ENCODE measurements at regions of chr1 and their contacts with region 1.

Region 1: DNA sequence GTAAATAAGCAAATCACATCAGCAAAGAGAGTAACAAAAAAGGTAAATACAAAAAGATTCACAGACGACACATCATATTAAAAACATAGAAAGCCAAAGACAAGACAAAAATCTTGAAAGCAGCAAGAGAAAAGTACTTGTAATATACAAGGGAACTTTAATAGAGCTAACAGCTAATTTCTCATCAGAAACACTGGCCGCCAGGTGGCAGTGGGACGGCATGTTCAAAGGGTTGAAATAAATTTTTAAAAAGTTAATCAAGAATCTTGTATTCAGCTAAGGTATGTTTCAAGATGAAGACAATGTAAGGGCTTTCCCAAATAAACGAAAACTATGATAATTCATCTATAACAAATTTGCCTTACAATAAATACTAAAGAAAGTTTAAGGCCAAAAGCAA is 358.1 kb downstream of the LRRIQ3 start:
- DNase-seq: peak; percentile 1
- ATAC-seq: no peak
- H3K4me3 ChIP-seq: no peak overlapping the region
- H3K27ac ChIP-seq: no peak overlapping the region
- H3K4me1 ChIP-seq: no peaks in the 10 kb centered on the region
- H3K27me3 ChIP-seq: no peaks in the 10 kb centered on the region
- CTCF ChIP-seq: peak; percentile 41; the same call in 1 of the 2 replicates
- EP300 ChIP-seq: no peak
- POLR2A ChIP-seq: no peak
- RAD21 ChIP-seq: no peak

Region 2: DNA sequence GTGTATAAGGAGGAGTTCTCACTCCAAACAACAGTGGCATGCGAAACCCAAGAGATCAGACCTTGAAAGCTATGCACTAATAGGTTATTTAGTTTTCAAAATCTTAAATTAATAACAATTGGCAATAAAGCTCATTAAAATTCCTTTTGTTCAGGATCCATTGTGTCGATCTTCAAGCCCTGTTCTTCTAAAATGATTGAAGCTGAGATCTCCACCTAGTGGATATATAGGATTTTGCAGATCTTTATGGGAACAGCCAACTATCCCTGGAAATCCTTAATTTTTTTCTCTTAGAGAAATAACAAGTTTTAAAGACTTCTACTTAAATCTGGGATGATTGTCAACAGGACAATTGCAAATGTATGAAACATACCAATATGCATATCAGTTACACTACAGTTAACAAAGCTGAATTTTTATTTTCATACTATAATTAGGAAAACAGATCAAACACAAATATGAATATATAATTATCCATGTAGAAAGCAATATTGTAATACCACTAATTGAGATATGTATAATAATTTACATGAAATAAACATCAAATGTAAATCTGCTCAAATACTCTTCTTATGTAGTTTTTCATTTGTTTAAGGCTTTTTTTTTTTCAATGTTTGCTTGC is 629.2 kb after region 1 on chr1:
- CTCF ChIA-PET with region 1: interaction called, 7 read pairs
- POLR2A ChIA-PET with region 1: no interaction called
- in situ Hi-C with region 1: loop called (anchors 25 kb)
- intact Hi-C with region 1: loop called (anchors 1 kb)
- DNase-seq: peak; percentile 48
- ATAC-seq: no peak
- H3K4me3 ChIP-seq: no peak overlapping the region
- H3K27ac ChIP-seq: no peak overlapping the region
- H3K4me1 ChIP-seq: no peaks in the 10 kb centered on the region
- H3K27me3 ChIP-seq: no peaks in the 10 kb centered on the region
- CTCF ChIP-seq: peak; percentile 51
- EP300 ChIP-seq: no peak
- POLR2A ChIP-seq: no peak
- RAD21 ChIP-seq: no peak

Region 3: GRCh38 chr1:74689621-74690363 is 849.9 kb after region 1 on chr1:
- CTCF ChIA-PET with region 1: no interaction called
- POLR2A ChIA-PET with region 1: no interaction called
- in situ Hi-C with region 1: loop called (anchors 25 kb)
- intact Hi-C with region 1: no loop called
- DNase-seq: peak; percentile 53
- ATAC-seq: peak; percentile 85
- H3K4me3 ChIP-seq: no peak overlapping the region
- H3K27ac ChIP-seq: no peak overlapping the region
- H3K4me1 ChIP-seq: peaks cover 8% of the 10 kb centered on the region
- H3K27me3 ChIP-seq: no peaks in the 10 kb centered on the region
- CTCF ChIP-seq: peak; percentile 85
- EP300 ChIP-seq: no peak
- POLR2A ChIP-seq: no peak
- RAD21 ChIP-seq: peak; percentile 60

Measured in HepG2 (cell line).